AG04450 (cell line): ENCODE measurements at regions of chr3 and their contacts with region 1.

Region 1: GRCh38 chr3:178456621-178457285 is 79.5 kb upstream of the KCNMB2 start:
- DNase-seq: no peak
- H3K4me3 ChIP-seq: no peak overlapping the region
- H3K27ac ChIP-seq: no peak overlapping the region
- H3K27me3 ChIP-seq: peaks cover 5% of the 10 kb centered on the region
- CTCF ChIP-seq: no peak

Region 2: GRCh38 chr3:178480795-178481194 is 24.0 kb after region 1 on chr3:
- CTCF ChIA-PET with region 1: no interaction called
- POLR2A ChIA-PET with region 1: no interaction called
- DNase-seq: no peak
- H3K4me3 ChIP-seq: no peak overlapping the region
- H3K27ac ChIP-seq: no peak overlapping the region
- H3K27me3 ChIP-seq: no peaks in the 10 kb centered on the region
- CTCF ChIP-seq: no peak

Region 3: DNA sequence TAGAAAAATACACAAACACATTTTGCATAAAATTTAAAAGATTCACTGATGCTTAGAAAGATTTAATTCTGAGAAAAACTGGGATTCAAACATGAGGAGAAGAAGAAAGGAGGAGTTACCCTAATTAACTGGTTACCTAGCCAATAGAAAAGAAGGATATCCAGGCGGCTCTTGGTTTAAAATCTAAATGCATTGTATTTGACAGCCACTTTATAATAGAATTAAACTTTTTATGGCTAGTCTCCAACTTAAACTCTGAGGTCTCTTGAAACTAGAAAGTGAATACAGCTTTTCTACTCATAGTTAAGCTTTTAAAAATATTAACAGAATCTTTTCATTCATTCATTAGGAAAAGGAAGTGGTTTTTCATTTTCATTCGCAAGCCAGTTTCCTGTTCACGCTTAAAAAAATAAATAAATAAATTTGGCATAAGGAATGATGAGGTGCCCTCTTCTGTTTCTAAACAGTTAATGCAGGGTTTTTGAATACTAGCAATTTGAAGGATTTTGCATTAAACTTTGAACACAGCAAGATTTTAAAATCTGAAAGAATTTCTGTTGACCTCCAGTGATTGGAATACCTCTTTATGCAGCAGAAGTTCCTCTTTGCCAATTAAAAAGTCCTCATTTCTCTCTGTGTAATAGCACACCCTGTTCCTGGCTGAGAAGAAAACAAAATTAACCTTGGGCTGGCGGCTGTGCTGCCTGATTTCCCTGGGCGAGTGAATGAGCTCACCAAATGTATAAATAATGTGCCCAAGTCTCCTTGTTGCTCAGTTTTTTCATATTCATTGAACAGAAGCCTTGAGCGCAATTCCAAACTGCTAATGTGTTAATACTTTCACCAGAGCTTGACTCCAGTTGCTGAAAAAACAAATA is 509.8 kb after region 1 on chr3:
- CTCF ChIA-PET with region 1: interaction called, 11 read pairs
- POLR2A ChIA-PET with region 1: no interaction called
- DNase-seq: no peak
- H3K4me3 ChIP-seq: no peak overlapping the region
- H3K27ac ChIP-seq: no peak overlapping the region
- H3K27me3 ChIP-seq: no peaks in the 10 kb centered on the region
- CTCF ChIP-seq: peak; percentile 61